CD8-positive, alpha-beta T cell (primary cell): ENCODE measurements at regions of chr11 and their contacts with region 1.

Region 1: GRCh38 chr11:13486926-13487660 is 8.7 kb downstream of the PTH start:
- DNase-seq: peak; percentile 22 to 80 (median 69)
- ATAC-seq: peak; percentile 90
- H3K4me3 ChIP-seq: peak overlapping the region; percentile 26 to 45
- H3K4me3 Mint-ChIP-seq: peak overlapping the region; percentile 83
- H3K27ac ChIP-seq: peak overlapping the region; percentile 13 to 24
- H3K27ac Mint-ChIP-seq: no peak overlapping the region
- H3K4me1 ChIP-seq: peaks cover 4% of the 10 kb centered on the region
- H3K4me1 Mint-ChIP-seq: peaks cover 6% of the 10 kb centered on the region
- H3K27me3 ChIP-seq: no peaks in the 10 kb centered on the region
- H3K27me3 Mint-ChIP-seq: peaks cover 11% of the 10 kb centered on the region
- CTCF ChIP-seq: peak; percentile 14

Region 2: GRCh38 chr11:14249121-14249963 is 762.2 kb after region 1 on chr11:
- CTCF ChIA-PET with region 1: no interaction called
- POLR2A ChIA-PET with region 1: no interaction called
- intact Hi-C with region 1: loop called in 1 of 2 experiments (anchors 5 kb)
- DNase-seq: peak; percentile 37 to 85 (median 73)
- ATAC-seq: peak; percentile 61
- H3K4me3 ChIP-seq: no peak overlapping the region
- H3K4me3 Mint-ChIP-seq: peak overlapping the region; percentile 61
- H3K27ac ChIP-seq: no peak overlapping the region
- H3K27ac Mint-ChIP-seq: no peak overlapping the region
- H3K4me1 ChIP-seq: peaks cover 16% of the 10 kb centered on the region
- H3K4me1 Mint-ChIP-seq: peaks cover 22% of the 10 kb centered on the region
- H3K27me3 ChIP-seq: no peaks in the 10 kb centered on the region
- H3K27me3 Mint-ChIP-seq: no peaks in the 10 kb centered on the region
- CTCF ChIP-seq: peak; percentile 98